ENCODE measurements at regions of chr3 and their contacts with region 1.

Region 1: DNA sequence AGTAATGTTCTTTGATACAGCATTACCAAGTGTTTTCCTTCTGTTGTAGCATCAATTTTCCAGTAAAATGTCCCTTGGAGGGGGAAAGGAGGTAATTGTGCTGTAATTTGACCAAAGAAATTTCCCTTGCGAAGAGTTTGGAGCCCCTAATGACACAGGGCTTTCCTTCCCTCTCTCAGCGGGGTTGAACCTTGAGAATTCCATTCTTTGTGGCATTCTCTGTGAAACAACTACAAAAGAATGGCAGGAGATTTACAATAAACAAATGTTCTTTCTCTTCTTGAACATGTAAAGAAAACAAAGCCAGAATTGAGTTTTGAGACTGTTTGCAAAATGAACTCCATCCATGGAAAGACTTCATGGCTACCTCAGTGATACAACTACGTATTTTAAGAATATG is 53.4 kb downstream of the SIDT1 start:
- DNase-seq: no peak
- ATAC-seq: no peak
- H3K4me3 ChIP-seq: no peak overlapping the region
- H3K27ac ChIP-seq: no peak overlapping the region
- H3K4me1 ChIP-seq: no peaks in the 10 kb centered on the region
- H3K27me3 ChIP-seq: peaks cover 0 to 5% (median 0%) of the 10 kb centered on the region in 7 donors
- CTCF ChIP-seq: no peak

Region 2: DNA sequence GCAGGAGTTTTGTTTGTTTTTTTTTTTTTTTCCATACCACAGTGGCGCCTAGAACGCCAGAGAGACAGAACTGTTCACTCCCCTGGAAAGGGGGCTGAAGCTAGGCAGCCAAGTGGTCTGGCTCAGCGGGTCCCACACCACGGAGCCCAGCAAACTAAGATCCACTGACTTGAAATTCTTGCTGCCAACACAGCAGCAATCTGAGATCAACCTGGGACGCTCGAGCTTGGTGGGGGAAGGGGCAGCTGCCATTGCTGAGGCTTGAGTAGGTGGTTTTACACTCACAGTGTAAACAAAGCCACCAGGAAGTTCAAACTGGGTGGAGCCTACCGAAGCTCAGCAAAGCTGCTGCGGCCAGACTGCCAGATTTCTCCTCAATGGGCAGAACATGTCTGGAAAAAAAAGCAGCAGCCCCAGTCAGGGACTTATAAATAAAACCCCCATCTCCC is 100.5 kb before region 1 on chr3:
- intact Hi-C with region 1: loop called in 1 of 10 experiments (anchors 10 kb)
- DNase-seq: no peak
- ATAC-seq: no peak
- H3K4me3 ChIP-seq: no peak overlapping the region
- H3K27ac ChIP-seq: no peak overlapping the region
- H3K4me1 ChIP-seq: no peaks in the 10 kb centered on the region
- H3K27me3 ChIP-seq: no peaks in the 10 kb centered on the region
- CTCF ChIP-seq: no peak